Activated CD4-positive, alpha-beta memory T cell treated with anti-CD3 and anti-CD28 coated beads for 36 hours (primary cell): ENCODE measurements at regions of chr6 and their contacts with region 1.

Region 1: DNA sequence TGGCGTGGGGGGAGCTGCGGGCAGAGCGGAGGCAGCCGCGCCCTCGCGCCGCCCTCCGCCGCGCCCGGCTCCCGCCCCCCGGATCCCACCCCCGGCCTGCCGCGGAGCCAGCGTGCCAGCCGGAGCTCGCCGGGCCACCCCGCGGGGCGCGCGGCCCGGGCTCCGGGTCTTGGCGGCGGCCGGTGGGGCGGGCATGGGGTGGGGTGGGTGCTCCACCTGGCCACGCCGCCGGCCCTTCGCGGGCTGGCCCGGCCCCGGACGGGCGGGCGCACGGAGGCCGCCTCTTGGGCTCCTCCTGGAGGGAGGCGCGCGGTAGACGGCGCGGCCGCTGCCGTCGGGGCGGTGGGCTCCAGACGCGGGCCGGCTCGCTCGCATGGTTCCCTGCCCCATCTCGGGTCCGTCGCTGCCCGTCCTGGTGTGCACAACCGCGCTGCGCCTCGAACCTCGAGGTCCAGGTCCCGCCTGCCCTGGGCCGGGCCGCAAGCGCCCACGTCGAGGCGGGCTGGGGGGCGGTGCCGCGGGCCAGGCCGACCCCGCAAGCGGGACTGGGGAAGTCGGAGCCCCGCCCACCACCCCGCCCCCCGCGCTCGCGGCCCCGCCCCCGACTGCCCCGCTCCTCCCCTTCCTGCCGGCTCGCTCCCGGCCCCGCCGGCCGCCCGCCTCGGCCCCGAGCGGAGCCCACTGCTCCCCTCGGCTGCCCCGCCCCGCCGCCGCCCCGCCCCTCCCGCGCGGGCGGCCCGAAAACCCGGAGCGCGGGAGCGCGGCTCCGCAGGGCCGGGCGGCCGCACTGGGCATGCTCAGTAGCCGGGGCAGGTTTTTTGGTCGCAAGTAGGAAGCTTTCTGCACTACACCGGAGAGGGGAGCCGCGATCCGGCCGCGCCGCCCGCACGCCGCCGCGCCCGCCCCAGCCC is at the start of gene CDYL:
- DNase-seq: peak; percentile 91
- H3K4me3 Mint-ChIP-seq: peak within 1 kb of the TSS; percentile 80
- H3K27ac Mint-ChIP-seq: peak within 1 kb of the TSS; percentile 76
- H3K4me1 Mint-ChIP-seq: peaks cover 51% of the 10 kb centered on the region
- H3K27me3 Mint-ChIP-seq: peaks cover 10% of the 10 kb centered on the region
- total RNA-seq, gene CDYL: 22.4 to 24.4 TPM

Region 2: GRCh38 chr6:4135665-4136353 is 640.0 kb before region 1 on chr6:
- CTCF ChIA-PET with region 1: no interaction called
- POLR2A ChIA-PET with region 1: no interaction called
- intact Hi-C with region 1: loop called (anchors 5 kb)
- DNase-seq: peak; percentile 96
- H3K4me3 Mint-ChIP-seq: peak overlapping the region; percentile 80
- H3K27ac Mint-ChIP-seq: peak overlapping the region; percentile 78
- H3K4me1 Mint-ChIP-seq: peaks cover 41% of the 10 kb centered on the region
- H3K27me3 Mint-ChIP-seq: no peaks in the 10 kb centered on the region

Region 3: DNA sequence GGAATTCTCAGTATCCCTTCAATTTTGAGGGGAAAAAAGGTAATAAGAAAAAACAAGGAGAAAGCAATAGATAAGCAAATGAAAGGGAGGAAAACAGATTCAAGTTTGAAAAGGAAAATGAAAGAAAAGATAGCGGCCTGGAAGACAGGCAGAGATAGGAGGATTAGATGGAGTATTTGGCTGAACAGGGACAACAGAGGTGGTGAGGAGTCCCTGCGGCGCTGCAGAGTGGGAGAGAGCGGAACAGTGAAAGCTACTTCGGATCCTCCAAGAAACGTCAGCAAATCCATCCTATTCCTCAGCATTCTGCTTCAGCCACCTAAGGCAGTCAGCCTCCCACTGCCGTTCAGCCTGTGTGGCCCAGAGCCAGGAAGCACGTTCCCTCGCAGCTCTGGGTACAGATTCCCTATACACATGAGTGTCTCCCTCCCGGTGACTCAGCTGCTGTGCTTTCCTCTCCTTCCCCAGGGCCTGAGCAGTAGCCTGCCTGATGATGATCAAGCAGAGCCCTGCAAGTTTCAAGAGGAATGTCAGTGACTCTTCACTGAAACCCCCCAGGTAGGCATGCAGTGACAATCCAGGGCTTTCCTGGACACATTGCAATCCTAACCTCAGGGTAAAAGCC is 43.0 kb before region 1 on chr6:
- CTCF ChIA-PET with region 1: no interaction called
- POLR2A ChIA-PET with region 1: no interaction called
- intact Hi-C with region 1: no loop called
- DNase-seq: no peak
- H3K4me3 Mint-ChIP-seq: no peak overlapping the region
- H3K27ac Mint-ChIP-seq: no peak overlapping the region
- H3K4me1 Mint-ChIP-seq: peaks cover 2% of the 10 kb centered on the region
- H3K27me3 Mint-ChIP-seq: peaks cover 18% of the 10 kb centered on the region

Region 4: DNA sequence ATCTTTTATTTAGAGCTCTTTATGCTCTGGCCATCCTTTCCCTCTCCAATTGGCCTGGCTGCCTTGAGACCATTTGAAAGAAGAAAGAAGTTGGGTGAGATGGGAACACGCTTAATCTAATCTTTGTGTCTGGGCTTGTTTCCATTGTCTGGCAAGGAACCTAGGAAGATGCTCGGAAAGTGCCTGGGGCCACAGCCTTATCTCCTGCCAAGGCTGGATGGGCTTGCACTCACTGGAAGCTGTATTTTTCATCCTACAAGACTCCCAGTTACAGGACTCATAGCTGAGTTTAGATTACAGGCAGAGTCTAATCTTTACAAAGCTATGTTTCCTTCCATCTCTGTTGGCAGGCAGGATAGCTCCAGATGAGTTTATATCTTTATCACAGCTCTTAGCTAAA is 32.8 kb before region 1 on chr6:
- CTCF ChIA-PET with region 1: no interaction called
- POLR2A ChIA-PET with region 1: no interaction called
- intact Hi-C with region 1: no loop called
- DNase-seq: no peak
- H3K4me3 Mint-ChIP-seq: no peak overlapping the region
- H3K27ac Mint-ChIP-seq: no peak overlapping the region
- H3K4me1 Mint-ChIP-seq: no peaks in the 10 kb centered on the region
- H3K27me3 Mint-ChIP-seq: peaks cover 5% of the 10 kb centered on the region

Region 5: GRCh38 chr6:4788953-4789584 is 13.2 kb after region 1 on chr6:
- CTCF ChIA-PET with region 1: interaction called, 6 read pairs
- POLR2A ChIA-PET with region 1: interaction called, 13 read pairs
- intact Hi-C with region 1: loop called (anchors 1 kb)
- DNase-seq: no peak
- H3K4me3 Mint-ChIP-seq: no peak overlapping the region
- H3K27ac Mint-ChIP-seq: no peak overlapping the region
- H3K4me1 Mint-ChIP-seq: peaks cover 55% of the 10 kb centered on the region
- H3K27me3 Mint-ChIP-seq: no peaks in the 10 kb centered on the region

Region 6: GRCh38 chr6:4820704-4821276 is 45.0 kb after region 1 on chr6:
- CTCF ChIA-PET with region 1: interaction called, 5 read pairs
- POLR2A ChIA-PET with region 1: no interaction called
- intact Hi-C with region 1: loop called (anchors 1 kb)
- DNase-seq: peak; percentile 57
- H3K4me3 Mint-ChIP-seq: no peak overlapping the region
- H3K27ac Mint-ChIP-seq: no peak overlapping the region
- H3K4me1 Mint-ChIP-seq: peaks cover 36% of the 10 kb centered on the region
- H3K27me3 Mint-ChIP-seq: no peaks in the 10 kb centered on the region

Region 7: DNA sequence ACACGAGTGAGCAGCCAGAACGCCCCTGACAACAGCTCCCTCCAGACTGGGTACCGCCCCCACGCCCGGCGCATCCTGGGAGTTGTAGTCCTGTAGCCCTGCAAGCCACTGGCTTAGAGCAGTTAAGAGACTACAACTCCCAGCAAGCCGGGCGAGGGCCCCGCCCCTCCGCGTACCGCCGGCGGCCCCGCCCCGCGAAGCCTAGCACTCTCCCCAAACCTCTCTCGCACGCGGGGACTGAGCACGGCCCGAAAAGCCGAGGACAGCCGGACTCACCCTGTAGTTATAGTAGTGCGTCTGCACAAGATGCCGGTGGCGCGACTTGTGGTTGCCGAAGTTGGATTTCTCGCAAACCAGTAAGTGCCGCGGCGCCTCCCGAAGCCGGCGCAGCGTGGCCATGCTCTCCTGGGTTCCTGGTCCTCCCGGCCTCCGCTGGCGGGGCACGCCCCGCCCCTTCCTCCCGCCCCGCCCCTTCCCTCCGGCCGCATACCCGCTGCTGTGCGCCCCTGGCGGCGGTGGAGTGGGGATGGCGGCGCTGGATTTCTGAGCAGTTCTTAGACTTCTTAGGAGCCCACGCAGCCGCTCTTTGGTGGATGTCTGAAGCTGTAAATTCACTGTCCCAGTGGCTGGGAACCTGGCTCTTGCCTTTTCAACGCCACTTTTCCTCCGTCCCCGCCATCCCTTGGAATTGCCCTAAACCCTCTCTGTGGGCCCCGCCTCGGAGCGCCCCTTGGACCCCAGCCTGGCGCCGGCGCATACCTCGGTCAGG is 227.9 kb after region 1 on chr6 and contains the start of gene RPP40:
- CTCF ChIA-PET with region 1: no interaction called
- POLR2A ChIA-PET with region 1: interaction called, 4 read pairs
- intact Hi-C with region 1: loop called (anchors 1 kb)
- DNase-seq: peak; percentile 99
- H3K4me3 Mint-ChIP-seq: peak within 1 kb of the TSS; percentile 86
- H3K27ac Mint-ChIP-seq: peak within 1 kb of the TSS; percentile 95
- H3K4me1 Mint-ChIP-seq: peaks cover 9% of the 10 kb centered on the region
- H3K27me3 Mint-ChIP-seq: no peaks in the 10 kb centered on the region
- total RNA-seq, gene RPP40: 6.0 to 6.4 TPM

Region 8: GRCh38 chr6:5260661-5261544 is 485.1 kb after region 1 on chr6 and contains the starts of genes FARS2 and LYRM4:
- CTCF ChIA-PET with region 1: no interaction called
- POLR2A ChIA-PET with region 1: no interaction called
- intact Hi-C with region 1: loop called (anchors 10 kb)
- DNase-seq: peak; percentile 93
- H3K4me3 Mint-ChIP-seq: peak within 1 kb of the TSS; percentile 98
- H3K27ac Mint-ChIP-seq: peak within 1 kb of the TSS; percentile 99
- H3K4me1 Mint-ChIP-seq: peaks cover 36% of the 10 kb centered on the region
- H3K27me3 Mint-ChIP-seq: no peaks in the 10 kb centered on the region
- total RNA-seq, gene FARS2: 22.7 to 23.7 TPM
- total RNA-seq, gene LYRM4: 50.6 to 53.6 TPM